Activated CD4-positive, alpha-beta T cell treated with anti-CD3 and anti-CD28 coated beads, Interleukin-2, amount 10 ng/mL, durations not matched to agents 24 days and 14 days (primary cell): ENCODE measurements at regions of chr3 and their contacts with region 1.

Region 1: DNA sequence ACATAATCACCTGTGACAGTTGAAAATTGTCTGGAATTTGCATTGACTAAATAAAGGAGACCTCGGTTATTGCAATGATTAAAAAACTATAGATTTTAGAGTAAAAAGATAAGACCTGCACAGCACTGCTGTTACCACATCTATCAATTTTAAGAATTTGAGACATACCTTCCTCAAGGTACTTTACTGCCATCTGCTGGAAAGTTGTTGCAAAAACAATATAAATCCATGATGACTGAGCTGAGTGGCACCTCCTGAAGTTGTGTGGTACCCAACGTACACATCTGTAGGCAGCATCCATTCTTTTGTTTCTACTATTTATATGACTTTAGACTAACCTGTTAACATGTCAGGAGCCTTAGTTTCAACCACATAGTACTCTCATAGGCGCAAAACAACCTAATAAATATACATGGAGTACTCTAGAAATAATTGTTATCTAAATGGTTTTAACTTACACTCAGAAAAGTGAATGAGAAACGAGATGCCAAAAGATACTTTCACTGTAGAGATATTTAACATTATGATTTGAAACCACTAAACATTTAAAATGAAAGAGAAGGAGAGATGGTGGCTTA is 106.7 kb downstream of the GHSR start:
- DNase-seq: peak; percentile 82
- H3K4me3 Mint-ChIP-seq: no peak overlapping the region
- H3K27ac Mint-ChIP-seq: no peak overlapping the region
- H3K4me1 Mint-ChIP-seq: no peaks in the 10 kb centered on the region
- H3K27me3 Mint-ChIP-seq: no peaks in the 10 kb centered on the region

Region 2: DNA sequence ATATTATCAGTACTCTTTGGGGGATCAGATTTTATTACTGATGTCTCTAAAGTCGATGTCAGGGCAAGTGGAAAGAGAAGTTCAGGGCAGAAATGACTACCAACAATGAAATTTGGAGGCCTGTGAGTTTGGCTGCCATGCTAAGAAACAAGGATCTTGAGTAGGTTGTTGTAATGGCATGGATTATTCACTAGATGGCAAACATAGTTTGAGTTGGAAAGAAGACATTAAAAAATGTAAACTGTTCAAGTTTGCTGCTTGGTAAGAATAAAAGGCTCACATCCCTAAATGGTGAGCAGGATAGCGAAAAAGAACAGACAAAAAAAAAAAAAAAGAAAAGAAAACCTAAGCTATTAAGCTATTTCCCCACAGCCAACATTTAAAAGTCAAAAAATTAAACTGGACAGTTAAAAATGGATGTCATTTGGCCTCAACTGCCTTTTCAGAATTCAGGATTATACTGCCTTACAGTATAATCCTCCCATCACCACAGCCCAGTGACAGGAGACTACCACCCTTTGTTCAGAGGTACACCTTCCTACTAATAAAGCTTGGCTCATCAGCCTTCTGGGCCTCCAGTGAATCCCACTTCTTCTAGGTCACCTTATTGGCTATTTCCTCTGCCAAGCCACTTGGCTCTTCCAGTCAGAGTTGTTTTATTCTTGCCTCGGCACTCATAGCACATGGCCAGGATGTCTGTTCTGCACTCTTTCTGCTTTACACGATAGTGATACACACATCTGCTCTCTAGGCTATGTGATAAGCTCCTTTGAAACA is 695.0 kb before region 1 on chr3:
- intact Hi-C with region 1: loop called (anchors 1 kb)
- DNase-seq: no peak
- H3K4me3 Mint-ChIP-seq: no peak overlapping the region
- H3K27ac Mint-ChIP-seq: no peak overlapping the region
- H3K4me1 Mint-ChIP-seq: no peaks in the 10 kb centered on the region
- H3K27me3 Mint-ChIP-seq: peaks cover 2% of the 10 kb centered on the region

Region 3: GRCh38 chr3:172039436-172040077 is 302.0 kb before region 1 on chr3 and contains the start of gene FNDC3B:
- intact Hi-C with region 1: loop called (anchors 1 kb)
- DNase-seq: peak; percentile 98
- H3K4me3 Mint-ChIP-seq: peak within 1 kb of the TSS; percentile 87
- H3K27ac Mint-ChIP-seq: peak within 1 kb of the TSS; percentile 95
- H3K4me1 Mint-ChIP-seq: peaks cover 17% of the 10 kb centered on the region
- H3K27me3 Mint-ChIP-seq: peaks cover 3% of the 10 kb centered on the region
- total RNA-seq, gene FNDC3B: 19.6 and 19.9 TPM in 2 replicates

Region 4: GRCh38 chr3:172367205-172368105 is 25.9 kb after region 1 on chr3:
- intact Hi-C with region 1: no loop called
- DNase-seq: no peak
- H3K4me3 Mint-ChIP-seq: no peak overlapping the region
- H3K27ac Mint-ChIP-seq: no peak overlapping the region
- H3K4me1 Mint-ChIP-seq: no peaks in the 10 kb centered on the region
- H3K27me3 Mint-ChIP-seq: no peaks in the 10 kb centered on the region